Tibial artery (tissue), 4 donors: ENCODE measurements at regions of chr5 and their contacts with region 1.

Region 1: DNA sequence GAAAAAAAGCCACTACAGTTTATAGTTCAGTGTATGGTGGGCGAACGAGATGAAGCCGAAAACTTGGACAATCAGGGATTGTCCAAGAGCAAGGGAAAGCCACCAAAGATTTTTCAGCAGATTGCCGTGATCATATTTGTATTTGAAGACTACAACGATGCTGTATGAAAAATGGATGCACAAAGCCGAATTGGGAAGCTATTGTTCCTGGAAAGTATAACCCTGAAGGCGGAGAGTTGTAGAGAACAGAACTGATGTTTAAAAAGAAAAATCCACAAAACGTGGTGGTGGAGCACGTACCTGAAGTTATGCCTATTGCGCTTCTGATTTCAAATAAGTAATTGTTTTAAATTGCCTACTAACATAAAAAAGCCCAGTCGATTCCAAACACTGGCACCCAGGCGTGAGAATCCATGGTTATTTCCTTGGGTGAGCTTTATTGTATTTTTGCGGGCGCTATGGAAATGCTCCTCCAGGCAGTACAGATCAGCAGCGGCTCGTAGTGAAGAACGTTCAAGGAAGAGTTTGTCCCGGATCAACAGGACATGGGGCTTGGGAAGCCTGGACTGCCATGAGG is 772 bp upstream of the TARS1 start:
- DNase-seq: no peak
- H3K4me3 ChIP-seq: peak overlapping the region; percentile 66 to 72
- H3K27ac ChIP-seq: peak overlapping the region; percentile 85 to 91
- H3K4me1 ChIP-seq: peaks cover 0 to 45% (median 16%) of the 10 kb centered on the region in 4 donors
- H3K27me3 ChIP-seq: no peaks in the 10 kb centered on the region
- CTCF ChIP-seq: no peak

Region 2: GRCh38 chr5:33509036-33509435 is 69.0 kb after region 1 on chr5:
- intact Hi-C with region 1: no loop called
- DNase-seq: no peak
- H3K4me3 ChIP-seq: no peak overlapping the region
- H3K27ac ChIP-seq: no peak overlapping the region
- H3K4me1 ChIP-seq: peaks cover 0 to 18% (median 10%) of the 10 kb centered on the region in 4 donors
- H3K27me3 ChIP-seq: no peaks in the 10 kb centered on the region
- CTCF ChIP-seq: no peak

Region 3: DNA sequence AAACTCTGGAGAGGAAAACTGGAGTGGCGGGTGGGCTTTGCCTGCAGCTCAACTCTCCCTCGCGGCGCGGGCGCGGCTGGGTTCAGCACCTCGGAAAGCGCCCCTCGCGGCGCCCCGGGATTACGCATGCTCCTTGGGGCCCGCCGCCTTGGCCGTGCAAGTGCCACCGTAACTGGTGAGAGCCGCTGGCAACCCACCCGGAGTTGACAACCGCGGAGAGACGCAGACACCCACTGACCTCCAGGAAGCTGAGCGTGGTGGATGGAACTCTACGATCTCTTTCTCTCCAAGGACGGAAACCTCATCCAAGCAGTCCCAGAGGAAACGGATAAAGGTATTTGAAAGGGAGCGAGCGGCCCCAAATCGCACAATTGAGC is 496.0 kb after region 1 on chr5:
- intact Hi-C with region 1: loop called (anchors 10 kb)
- DNase-seq: peak; percentile 28 to 69
- H3K4me3 ChIP-seq: peak overlapping the region; percentile 28 to 45
- H3K27ac ChIP-seq: no peak overlapping the region
- H3K4me1 ChIP-seq: peaks cover 0 to 21% (median 19%) of the 10 kb centered on the region in 4 donors
- H3K27me3 ChIP-seq: peaks cover 0 to 43% of the 10 kb centered on the region in 2 donors
- CTCF ChIP-seq: peak; percentile 26 to 35

Region 4: DNA sequence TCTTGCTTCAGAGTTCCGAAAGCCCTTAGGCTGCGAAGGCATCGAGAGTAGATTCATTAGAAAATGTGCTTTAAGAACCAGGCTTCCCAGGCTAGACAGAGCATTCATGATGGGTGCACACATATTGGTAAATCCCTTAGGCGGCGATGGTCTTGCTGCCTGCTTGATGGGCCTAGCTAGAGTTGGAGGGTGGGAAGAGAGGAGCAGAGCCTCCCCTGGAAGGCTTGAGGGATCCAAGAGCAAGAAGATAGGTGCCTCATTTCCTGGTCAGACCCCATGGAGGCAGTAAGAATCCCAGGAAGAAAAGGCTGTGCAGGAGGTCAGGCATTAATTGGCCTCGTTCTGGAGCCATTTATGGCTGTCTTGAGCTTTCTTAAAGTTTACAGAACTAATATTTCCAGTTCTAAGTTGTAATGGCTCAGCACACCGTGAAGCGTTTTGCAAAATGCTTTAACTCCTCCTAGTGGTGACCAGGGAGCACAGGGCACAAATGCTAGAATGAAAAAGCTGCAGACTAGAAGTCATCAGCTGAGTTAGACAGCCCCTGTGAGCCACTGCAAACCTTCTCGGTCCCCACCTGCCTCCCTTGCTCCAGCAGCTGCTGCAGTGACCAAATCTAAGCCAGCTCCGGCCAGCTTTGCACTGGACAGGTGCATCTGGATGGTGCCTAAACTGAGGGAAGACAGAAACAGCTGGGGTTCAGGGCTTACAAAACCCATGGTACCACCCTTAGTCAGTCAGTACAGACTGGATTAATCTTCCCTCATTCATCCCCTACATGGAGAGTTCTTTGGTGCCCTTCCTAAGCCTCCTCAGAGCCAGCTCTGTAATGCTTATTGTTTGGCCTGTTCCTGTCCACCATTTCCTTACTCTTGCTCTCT is 529.8 kb after region 1 on chr5:
- intact Hi-C with region 1: loop called (anchors 10 kb)
- DNase-seq: no peak
- H3K4me3 ChIP-seq: no peak overlapping the region
- H3K27ac ChIP-seq: no peak overlapping the region
- H3K4me1 ChIP-seq: no peaks in the 10 kb centered on the region
- H3K27me3 ChIP-seq: no peaks in the 10 kb centered on the region
- CTCF ChIP-seq: peak; percentile 58 to 62